A673 (cell line): ENCODE measurements at regions of chr14 and their contacts with region 1.

Region 1: DNA sequence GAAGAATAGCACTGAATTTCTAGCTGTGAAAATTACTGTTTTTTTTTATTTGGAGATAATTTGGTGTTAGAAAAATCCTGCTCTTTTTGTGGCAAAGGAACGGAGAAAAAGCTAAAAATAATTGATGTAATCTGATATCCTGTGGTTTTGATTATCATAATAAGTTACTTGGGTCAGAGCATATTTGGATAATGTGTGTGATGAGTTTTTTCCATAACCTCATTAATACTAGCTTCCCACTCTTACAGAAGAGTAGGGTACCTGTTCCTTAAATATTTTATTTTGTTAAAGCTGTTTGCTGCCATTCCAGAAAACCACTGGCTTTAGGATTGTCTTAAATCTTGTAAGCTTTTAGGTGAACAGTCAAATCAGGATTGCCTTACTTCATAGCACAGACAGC is 4.7 kb downstream of the PSMC6 start:
- DNase-seq: no peak
- H3K4me3 ChIP-seq: no peak overlapping the region
- H3K27ac ChIP-seq: peak overlapping the region; percentile 34
- H3K4me1 ChIP-seq: peaks cover 24% of the 10 kb centered on the region
- H3K27me3 ChIP-seq: no peaks in the 10 kb centered on the region
- CTCF ChIP-seq: no peak

Region 2: DNA sequence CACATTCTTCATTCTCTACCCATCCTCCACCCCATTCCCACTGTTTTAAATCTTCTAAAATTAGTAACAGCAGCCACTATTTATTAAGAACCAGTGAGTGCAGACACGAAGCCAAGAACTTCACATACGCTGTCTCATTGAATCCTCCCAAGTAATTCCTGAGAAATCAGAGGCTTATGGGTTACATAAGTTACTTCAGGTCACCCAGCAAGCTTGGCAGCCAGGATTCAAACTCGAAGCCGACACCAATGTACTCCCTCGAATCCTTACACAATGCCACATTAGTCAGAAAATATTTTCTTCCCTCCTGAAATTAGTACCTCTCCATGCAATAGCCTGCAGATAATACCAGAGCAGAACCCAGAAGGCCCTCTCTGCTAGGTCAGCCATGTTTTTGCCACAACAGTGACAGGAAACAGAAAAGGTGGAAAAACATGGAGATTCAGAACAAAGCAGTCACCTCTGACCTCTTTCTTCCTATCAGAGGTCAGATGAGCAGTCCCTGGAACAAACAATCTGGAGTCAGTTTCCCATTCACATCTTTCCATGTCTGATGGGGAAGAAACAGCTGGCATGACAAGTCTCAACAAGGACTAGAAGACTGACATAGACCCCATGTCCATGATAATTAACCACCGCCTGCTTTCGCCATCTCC is 659.2 kb before region 1 on chr14:
- CTCF ChIA-PET with region 1: no interaction called
- POLR2A ChIA-PET with region 1: interaction called, 14 read pairs
- intact Hi-C with region 1: no loop called
- DNase-seq: no peak
- H3K4me3 ChIP-seq: no peak overlapping the region
- H3K27ac ChIP-seq: no peak overlapping the region
- H3K4me1 ChIP-seq: peaks cover 29% of the 10 kb centered on the region
- H3K27me3 ChIP-seq: no peaks in the 10 kb centered on the region
- CTCF ChIP-seq: no peak

Region 3: GRCh38 chr14:52650774-52651173 is 60.9 kb before region 1 on chr14:
- CTCF ChIA-PET with region 1: no interaction called
- POLR2A ChIA-PET with region 1: no interaction called
- intact Hi-C with region 1: no loop called
- DNase-seq: peak; percentile 28
- H3K4me3 ChIP-seq: no peak overlapping the region
- H3K27ac ChIP-seq: no peak overlapping the region
- H3K4me1 ChIP-seq: no peaks in the 10 kb centered on the region
- H3K27me3 ChIP-seq: no peaks in the 10 kb centered on the region
- CTCF ChIP-seq: peak; percentile 47

Region 4: GRCh38 chr14:52852810-52853523 is 141.3 kb after region 1 on chr14:
- CTCF ChIA-PET with region 1: no interaction called
- POLR2A ChIA-PET with region 1: no interaction called
- intact Hi-C with region 1: no loop called
- DNase-seq: peak; percentile 80
- H3K4me3 ChIP-seq: no peak overlapping the region
- H3K27ac ChIP-seq: peak overlapping the region; percentile 45
- H3K4me1 ChIP-seq: peaks cover 18% of the 10 kb centered on the region
- H3K27me3 ChIP-seq: no peaks in the 10 kb centered on the region
- CTCF ChIP-seq: no peak